ENCODE measurements at regions of chr15 and their contacts with region 1.

Region 1: GRCh38 chr15:56978900-56979662 is 60.6 kb downstream of the TCF12 start:
- DNase-seq: no peak
- ATAC-seq: no peak

Region 2: DNA sequence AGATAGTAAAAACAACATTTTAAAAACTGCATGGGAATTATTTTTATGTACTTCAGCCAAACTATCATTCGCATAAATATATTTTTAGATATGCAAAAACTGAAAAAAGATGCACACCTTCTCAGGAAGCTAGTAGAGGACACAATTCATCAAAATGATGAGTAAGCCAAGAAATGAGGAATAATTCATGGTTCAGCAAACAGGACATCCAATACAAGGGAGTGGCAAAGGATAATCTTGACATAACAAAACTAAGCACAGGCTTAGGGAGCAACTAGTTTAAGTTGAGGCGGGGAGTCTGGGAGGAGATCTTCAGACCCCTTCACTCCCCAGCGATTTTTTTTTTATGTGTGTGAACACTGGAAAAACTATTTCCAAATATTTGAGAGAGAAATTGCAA is 339.5 kb before region 1 on chr15:
- intact Hi-C with region 1: loop called (anchors 5 kb)
- DNase-seq: no peak
- ATAC-seq: no peak

Region 3: GRCh38 chr15:56732921-56733797 is 245.9 kb before region 1 on chr15 and contains the start of gene ZNF280D:
- intact Hi-C with region 1: no loop called
- DNase-seq: peak; percentile 94
- ATAC-seq: peak; percentile 98
- total RNA-seq, gene ZNF280D: 96.6 TPM